ENCODE measurements at regions of chr11 and their contacts with region 1.

Region 1: DNA sequence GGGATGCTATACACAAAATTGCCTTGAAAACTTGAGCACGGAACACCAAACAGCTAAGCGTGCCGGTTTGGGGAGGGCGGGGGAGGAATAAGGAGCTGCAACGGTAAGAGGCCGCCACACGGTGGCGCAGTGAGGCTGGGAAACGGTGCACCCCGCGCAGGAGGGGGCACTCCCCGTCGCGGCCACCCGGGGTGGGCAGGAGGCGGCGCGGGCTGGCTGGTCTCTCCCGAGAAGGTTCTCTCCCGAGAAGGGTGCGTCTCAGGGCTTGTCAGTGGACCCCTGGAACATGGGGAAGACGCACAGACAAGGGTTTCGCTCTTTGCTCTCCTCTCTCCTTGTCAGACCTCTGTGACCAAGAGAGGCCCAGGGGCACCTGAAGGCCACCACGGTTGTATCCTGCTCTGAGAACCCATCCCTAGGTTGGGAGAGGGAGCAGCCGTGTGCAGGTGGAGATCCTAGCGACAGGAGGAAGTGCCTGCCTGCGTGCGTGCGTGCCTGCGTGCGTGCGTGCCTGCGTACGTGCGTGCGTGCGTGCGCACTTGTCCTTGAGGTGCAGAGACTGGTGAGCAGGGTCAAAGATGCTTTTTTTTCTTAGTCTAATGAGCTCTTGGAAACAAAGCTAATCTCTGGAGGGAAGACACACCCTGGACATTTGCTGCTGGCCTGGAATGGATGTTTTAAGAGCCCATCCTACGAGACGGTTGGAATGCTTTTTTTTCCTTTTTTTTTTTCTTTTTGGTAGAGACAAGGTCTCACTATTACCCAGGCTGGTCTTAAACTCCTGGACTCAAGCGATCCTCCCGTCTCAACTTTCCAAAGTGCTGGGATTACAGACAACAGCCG is 18.1 kb upstream of the JAM3 start:
- DNase-seq: peak; percentile 83
- H3K27ac ChIP-seq: no peak overlapping the region
- CTCF ChIP-seq: peak; percentile 85

Region 2: DNA sequence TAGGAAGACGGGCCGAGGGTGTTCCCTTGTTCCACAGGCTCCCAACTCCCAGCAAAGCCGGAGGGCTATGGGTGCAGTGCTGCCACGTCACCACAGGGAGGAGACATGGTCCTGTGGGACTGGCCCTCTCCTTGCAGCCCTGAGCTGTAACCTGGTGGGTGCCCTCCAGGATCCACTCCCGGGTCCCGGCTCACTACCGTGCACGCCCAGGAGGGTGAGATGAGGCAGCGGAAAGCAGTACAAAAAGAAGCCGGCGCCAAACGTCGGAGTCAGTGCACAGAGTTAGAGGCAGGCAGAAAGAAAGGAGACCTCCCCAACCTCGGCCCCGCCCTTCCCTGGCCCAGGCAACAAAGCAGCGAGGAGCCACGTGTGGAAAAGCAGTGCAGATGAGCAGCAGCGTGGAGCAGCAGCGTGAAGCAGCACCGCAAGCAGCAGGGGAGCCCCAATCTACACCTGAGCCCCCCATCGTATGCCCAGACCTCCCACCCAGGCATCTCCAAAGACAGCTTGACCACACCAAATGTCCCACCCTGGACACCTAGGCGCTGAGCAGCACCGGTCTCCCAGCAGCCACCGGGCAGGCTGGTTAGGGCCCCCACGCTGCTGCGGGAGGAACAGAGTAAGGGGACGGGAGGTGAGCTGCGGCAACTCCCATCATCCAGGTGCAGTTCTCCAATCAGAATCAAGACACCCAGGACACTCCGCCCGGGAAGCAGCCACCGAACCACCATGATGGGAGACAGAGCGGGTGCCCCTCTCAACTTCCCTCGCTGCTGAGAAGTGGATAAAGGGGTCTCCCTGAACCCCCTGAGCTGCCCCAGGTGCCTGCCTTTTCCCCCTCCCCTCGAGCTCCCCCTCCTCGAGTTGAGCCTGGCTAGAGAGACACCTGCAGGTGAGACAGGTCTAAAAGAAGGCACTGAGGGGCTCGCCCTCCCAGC is 122.8 kb before region 1 on chr11:
- CTCF ChIA-PET with region 1: interaction called, 39 read pairs
- POLR2A ChIA-PET with region 1: no interaction called
- DNase-seq: peak; percentile 78
- H3K27ac ChIP-seq: no peak overlapping the region
- CTCF ChIP-seq: peak; percentile 81

Region 3: DNA sequence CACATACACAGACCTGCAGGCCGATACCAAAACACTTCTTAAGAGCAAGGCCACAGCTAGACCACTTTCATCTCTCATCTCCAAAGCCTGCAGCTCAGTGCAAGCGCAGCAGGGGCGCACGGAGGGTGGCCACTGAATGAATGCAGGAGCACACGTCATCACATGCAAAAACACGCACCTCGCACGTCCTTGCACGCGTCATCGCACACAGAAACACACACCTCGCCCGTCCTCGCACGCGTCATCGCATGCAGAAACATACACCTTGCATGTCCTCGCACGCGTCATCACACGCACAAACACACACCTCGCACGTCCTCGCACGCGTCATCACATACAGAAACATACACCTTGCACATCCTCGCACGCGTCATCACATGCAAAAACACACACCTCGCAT is 111.2 kb before region 1 on chr11:
- CTCF ChIA-PET with region 1: no interaction called
- POLR2A ChIA-PET with region 1: no interaction called
- DNase-seq: no peak
- H3K27ac ChIP-seq: no peak overlapping the region
- CTCF ChIP-seq: no peak

Region 4: DNA sequence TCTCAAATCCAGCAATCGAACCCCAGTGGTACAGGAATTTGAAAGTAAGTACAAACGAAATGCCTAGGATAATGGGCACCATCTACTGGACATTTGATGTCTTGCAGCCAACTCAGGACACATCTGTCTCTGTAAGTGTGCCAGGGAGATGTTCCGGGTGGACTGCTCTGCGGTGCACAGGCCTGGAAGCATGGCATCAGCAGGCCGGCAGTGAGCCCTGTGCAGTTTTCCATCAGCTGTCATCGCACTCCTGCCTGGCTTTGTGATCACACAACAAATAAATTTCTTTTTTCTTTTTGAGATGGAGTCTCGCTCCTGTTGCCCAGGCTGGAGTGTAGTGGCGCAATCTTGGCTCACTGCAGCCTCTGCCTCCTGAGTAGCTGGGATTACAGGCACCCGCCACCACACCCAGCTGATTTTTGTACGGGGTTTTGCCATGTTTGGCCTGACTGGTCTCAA is 89.1 kb after region 1 on chr11:
- CTCF ChIA-PET with region 1: interaction called, 10 read pairs
- POLR2A ChIA-PET with region 1: no interaction called
- DNase-seq: peak; percentile 67
- H3K27ac ChIP-seq: no peak overlapping the region
- CTCF ChIP-seq: peak; percentile 85